ENCODE measurements at regions of chr5 and their contacts with region 1.

Region 1: DNA sequence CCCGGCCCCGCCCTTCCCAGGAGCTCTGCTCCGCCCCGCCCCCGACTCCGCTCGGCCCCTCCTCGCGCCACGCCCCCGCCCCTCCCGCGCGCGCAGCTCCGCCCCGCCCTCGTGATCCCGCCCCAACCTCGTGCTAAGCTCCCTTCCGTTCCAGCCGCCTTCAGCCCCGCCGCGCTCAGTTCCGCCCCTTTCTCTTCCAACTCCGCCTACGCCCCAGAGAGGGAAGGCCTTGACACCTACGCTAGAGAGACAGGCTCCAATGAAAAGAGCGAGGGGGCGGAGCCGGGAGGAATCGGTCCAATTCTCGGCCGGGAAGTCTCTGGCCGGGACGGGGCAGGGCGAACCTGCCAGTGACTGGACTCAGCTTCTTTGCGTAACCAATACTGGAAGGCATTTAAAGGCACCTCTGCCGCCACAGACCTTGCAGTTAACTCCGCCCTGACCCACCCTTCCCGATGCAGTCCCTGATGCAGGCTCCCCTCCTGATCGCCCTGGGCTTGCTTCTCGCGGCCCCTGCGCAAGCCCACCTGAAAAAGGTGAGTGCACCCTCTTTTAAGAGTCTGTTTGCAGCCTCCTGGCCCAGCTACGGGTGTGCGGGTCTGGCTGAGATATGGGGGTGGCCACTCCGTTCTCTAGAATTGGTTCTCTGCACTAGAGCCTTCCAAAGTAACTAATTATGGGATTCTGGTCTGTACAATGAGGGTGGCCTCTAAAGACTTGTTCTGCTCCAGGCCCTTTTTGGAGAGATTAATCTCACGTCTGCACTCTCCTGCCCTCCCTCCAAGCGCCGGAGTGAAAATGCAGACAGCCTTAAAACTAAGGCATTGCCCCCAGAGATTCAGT is at the start of gene GM2A:
- DNase-seq: peak; percentile 95
- ATAC-seq: peak; percentile 97
- H3K4me3 ChIP-seq: peak within 1 kb of the TSS; percentile 92 to 96
- H3K27ac ChIP-seq: peak within 1 kb of the TSS; percentile 88
- H3K4me1 ChIP-seq: peaks cover 10% of the 10 kb centered on the region; the same call in 1 of the 2 replicates
- H3K27me3 ChIP-seq: no peaks in the 10 kb centered on the region
- CTCF ChIP-seq: no peak
- total RNA-seq, gene GM2A: 40.7 TPM

Region 2: DNA sequence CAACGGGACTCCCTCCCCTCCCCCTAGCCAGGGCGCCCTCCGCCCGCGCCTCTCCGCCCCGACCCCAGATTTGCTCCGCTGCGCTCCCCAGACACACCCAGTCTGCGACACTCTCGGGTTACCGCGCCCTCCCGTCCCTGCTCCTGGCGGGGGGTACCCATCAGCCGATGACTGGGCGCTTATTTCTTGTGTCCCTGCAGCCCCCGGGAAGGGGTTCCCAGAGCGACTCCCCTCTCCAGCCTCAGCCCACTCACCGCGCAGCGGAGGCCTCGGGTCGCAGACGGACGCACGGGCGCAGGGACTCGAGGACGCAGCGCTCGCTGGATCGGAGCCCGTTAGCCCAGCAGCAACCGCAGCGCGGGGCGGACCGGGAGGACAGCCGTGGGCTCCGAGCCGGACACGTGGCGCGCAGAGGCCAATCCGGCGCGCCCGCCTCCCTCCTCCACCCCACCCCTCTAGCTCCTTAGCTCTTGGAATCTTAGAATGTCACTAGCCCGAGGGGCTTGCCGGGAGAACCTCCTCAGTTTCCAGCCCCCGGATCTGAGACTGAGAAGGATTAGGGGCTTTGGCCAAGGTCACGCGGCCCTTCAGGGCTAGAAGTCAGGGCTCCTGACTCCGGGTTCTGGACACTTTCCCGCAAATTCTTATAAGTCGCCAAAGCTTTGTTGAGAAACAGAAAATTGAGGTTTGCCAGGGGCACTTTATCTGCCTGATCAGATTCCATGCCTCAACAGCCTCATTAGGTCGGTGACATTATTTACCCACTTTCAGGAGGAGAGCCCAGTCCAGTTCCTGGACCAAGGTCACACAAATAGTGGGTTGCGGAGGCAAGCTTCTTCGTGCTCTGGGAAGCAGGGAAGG is 95.3 kb before region 1 on chr5 and contains the start of gene ANXA6:
- CTCF ChIA-PET with region 1: no interaction called
- POLR2A ChIA-PET with region 1: interaction called, 10 read pairs
- in situ Hi-C with region 1: no loop called
- intact Hi-C with region 1: no loop called
- DNase-seq: no peak
- ATAC-seq: peak; percentile 98
- H3K4me3 ChIP-seq: peak within 1 kb of the TSS; percentile 69 to 70
- H3K27ac ChIP-seq: peak within 1 kb of the TSS; percentile 80
- H3K4me1 ChIP-seq: 0 out of 2 replicates have a peak, but pooled peaks cover 8% of the 10 kb centered on the region
- H3K27me3 ChIP-seq: no peaks in the 10 kb centered on the region; the same call in 1 of the 2 replicates
- CTCF ChIP-seq: no peak
- total RNA-seq, gene ANXA6: 60.0 TPM

Region 3: DNA sequence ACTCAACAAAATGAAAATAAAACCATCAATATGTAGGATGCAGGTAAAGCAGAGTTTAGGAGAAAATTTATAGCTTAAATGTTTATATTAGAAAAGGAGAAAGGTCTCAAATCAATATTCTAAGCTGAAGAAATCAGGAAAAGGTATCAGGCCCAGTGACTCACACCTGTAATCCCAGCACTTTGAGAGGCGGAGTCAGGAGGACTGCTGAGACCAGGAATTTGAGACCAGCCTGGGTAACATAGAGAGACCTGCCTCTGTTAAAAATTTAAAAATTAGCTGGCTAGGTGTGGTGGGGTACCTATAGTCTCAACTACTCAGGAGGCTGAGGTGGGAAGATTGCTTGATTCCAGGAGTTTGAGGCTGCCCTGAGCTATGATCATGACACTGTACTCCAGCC is 61.3 kb before region 1 on chr5:
- CTCF ChIA-PET with region 1: interaction called, 11 read pairs
- POLR2A ChIA-PET with region 1: no interaction called
- in situ Hi-C with region 1: no loop called
- intact Hi-C with region 1: no loop called
- DNase-seq: no peak
- ATAC-seq: no peak
- H3K4me3 ChIP-seq: no peak overlapping the region
- H3K27ac ChIP-seq: no peak overlapping the region
- H3K4me1 ChIP-seq: no peaks in the 10 kb centered on the region
- H3K27me3 ChIP-seq: no peaks in the 10 kb centered on the region
- CTCF ChIP-seq: no peak

Region 4: GRCh38 chr5:151315998-151316597 is 63.1 kb after region 1 on chr5:
- CTCF ChIA-PET with region 1: interaction called, 11 read pairs
- POLR2A ChIA-PET with region 1: no interaction called
- in situ Hi-C with region 1: no loop called
- intact Hi-C with region 1: no loop called
- DNase-seq: peak; percentile 58
- ATAC-seq: peak; percentile 90
- H3K4me3 ChIP-seq: no peak overlapping the region
- H3K27ac ChIP-seq: no peak overlapping the region
- H3K4me1 ChIP-seq: no peaks in the 10 kb centered on the region
- H3K27me3 ChIP-seq: peaks cover 2% of the 10 kb centered on the region; the same call in 1 of the 2 replicates
- CTCF ChIP-seq: peak; percentile 94

Region 5: DNA sequence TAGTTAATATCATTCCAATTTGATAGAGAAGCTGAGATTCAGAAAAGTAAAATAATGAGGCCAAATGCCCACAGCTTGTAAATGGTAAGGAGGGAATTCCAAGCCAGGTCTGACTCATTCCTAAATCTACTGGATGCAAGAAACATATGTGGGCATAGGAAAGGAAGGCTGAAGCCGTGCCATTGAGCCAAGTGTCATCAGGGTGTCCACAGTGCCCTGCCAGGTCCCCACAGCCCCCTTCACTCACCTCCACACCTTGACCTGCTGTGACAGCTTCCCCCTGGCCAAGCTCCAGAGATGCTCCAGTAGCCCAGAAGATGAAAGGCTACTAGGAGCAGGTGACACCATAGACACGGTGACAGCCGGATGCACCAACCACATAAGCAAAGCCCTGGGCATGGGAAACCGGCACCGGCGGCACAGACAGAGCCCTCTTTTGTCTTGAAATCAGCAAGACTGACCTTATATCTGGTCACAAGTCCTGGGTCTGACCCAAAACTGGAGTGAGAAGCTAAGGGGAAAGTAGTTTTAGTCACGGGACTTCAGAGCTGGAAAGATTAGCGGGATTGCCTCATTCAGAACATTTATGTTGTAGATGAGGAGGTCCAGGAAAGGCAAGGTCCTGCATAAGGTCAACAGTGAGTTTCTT is 358.3 kb after region 1 on chr5:
- CTCF ChIA-PET with region 1: no interaction called
- POLR2A ChIA-PET with region 1: interaction called, 10 read pairs
- in situ Hi-C with region 1: no loop called
- intact Hi-C with region 1: no loop called
- DNase-seq: no peak
- ATAC-seq: no peak
- H3K4me3 ChIP-seq: no peak overlapping the region
- H3K27ac ChIP-seq: no peak overlapping the region
- H3K4me1 ChIP-seq: no peaks in the 10 kb centered on the region
- H3K27me3 ChIP-seq: no peaks in the 10 kb centered on the region
- CTCF ChIP-seq: no peak